HEK293 (cell line): ENCODE measurements at regions of chr6 and their contacts with region 1.

Region 1: GRCh38 chr6:53437557-53438202 is 88.9 kb upstream of the ELOVL5 start:
- H3K4me3 ChIP-seq: no peak overlapping the region
- H3K27ac ChIP-seq: no peak overlapping the region
- H3K4me1 ChIP-seq: no peaks in the 10 kb centered on the region
- CTCF ChIP-seq: peak; percentile 18; the same call in 1 of the 2 replicates

Region 2: GRCh38 chr6:53294095-53294494 is 143.6 kb before region 1 on chr6:
- CTCF ChIA-PET with region 1: interaction called, 10 read pairs
- POLR2A ChIA-PET with region 1: no interaction called
- H3K4me3 ChIP-seq: no peak overlapping the region
- H3K27ac ChIP-seq: no peak overlapping the region
- H3K4me1 ChIP-seq: no peaks in the 10 kb centered on the region; the same call in 1 of the 2 replicates
- CTCF ChIP-seq: peak; percentile 30; the same call in 1 of the 2 replicates

Region 3: DNA sequence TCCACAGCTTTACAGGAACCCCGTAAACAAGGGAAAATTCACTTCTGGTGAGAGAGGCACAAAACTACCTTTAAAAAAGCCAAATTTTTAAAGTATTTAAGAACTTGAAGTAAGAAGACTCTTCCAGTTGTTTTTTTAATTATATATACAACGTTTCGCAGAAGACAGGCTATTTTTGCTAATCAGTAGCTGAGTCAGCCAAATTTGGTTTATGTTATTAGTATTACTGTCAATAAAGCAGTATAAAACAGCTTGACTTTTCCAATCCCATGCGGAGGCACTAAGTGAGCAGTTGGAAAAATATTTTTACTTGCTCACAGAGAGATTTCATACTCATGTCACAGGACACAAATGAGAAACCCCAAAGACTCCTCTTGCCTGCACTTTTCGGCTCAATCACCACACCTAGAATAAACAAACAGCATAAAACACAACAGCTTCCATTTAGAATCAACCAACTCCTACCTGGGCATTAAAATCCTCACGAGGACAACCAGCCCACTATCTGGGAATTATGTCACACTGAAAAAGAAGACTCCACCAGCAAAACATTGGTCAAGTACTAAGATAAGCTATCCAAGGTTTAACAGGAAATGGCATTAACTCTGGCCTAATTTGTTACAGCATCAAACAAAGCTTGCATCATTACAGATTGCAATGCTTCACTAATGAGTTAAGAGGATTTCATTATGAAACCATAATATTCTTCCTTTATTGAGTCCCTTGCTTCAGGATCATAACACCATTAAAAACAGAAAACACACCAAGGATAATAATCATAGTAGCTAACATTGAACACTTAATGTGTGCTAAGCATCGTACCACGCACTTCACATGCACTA is 115.3 kb before region 1 on chr6:
- CTCF ChIA-PET with region 1: no interaction called
- POLR2A ChIA-PET with region 1: no interaction called
- H3K4me3 ChIP-seq: no peak overlapping the region
- H3K27ac ChIP-seq: no peak overlapping the region
- H3K4me1 ChIP-seq: peaks cover 33% of the 10 kb centered on the region
- CTCF ChIP-seq: no peak

Region 4: DNA sequence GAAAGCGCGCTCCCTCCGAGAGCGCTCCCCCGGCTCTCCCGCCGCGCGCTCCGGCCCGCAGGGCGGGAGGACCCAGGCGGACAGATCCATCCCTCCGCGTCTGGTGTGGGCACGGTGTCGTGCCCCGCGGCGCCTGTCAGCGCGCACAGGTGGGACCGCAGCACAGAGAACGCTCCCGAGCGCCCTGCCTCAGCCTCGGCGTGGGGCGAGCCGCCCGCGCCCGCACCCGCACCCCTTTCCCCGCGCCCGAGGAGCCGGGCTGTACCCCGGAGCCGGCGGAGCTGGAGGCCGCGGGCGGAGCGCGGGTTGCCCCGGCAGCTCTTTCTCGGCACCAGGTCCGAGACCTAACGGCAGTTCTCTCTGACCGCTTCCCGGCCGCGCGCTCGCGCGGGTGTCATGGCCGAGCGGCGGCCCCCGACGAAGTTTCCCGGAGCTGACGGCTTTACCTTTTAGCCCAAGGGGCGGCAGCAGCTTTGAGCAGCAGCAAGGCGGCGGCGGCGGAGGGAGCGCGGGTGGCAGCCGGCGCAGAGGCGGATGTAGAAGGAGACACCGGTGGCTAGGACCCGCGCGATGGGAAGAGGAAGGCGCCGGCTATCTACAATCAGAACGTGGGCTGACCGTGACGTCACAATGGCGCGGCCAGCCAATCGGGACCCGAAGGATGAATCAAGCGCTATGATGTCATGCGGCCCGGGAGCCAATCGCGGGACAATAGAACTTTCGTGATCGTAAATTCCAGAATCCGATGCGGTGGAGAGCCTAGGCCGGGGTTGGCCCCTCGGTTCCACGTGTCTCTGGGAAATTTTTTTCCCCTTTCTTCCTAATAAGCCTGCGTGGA is 89.1 kb before region 1 on chr6 and contains the start of gene ELOVL5:
- CTCF ChIA-PET with region 1: interaction called, 11 read pairs
- POLR2A ChIA-PET with region 1: no interaction called
- H3K4me3 ChIP-seq: peak within 1 kb of the TSS; percentile 90
- H3K27ac ChIP-seq: peak within 1 kb of the TSS; percentile 86
- H3K4me1 ChIP-seq: peaks cover 6% of the 10 kb centered on the region
- CTCF ChIP-seq: peak; percentile 22; the same call in 1 of the 2 replicates

Region 5: GRCh38 chr6:53447869-53448268 is 10.2 kb after region 1 on chr6:
- CTCF ChIA-PET with region 1: interaction called, 10 read pairs
- POLR2A ChIA-PET with region 1: no interaction called
- H3K4me3 ChIP-seq: no peak overlapping the region
- H3K27ac ChIP-seq: no peak overlapping the region
- H3K4me1 ChIP-seq: no peaks in the 10 kb centered on the region
- CTCF ChIP-seq: no peak

Region 6: GRCh38 chr6:53458105-53458866 is 20.6 kb after region 1 on chr6:
- CTCF ChIA-PET with region 1: no interaction called
- POLR2A ChIA-PET with region 1: no interaction called
- H3K4me3 ChIP-seq: no peak overlapping the region
- H3K27ac ChIP-seq: no peak overlapping the region
- H3K4me1 ChIP-seq: no peaks in the 10 kb centered on the region
- CTCF ChIP-seq: no peak

Region 7: GRCh38 chr6:53484476-53485280 is 47.0 kb after region 1 on chr6:
- CTCF ChIA-PET with region 1: interaction called, 21 read pairs
- POLR2A ChIA-PET with region 1: no interaction called
- H3K4me3 ChIP-seq: no peak overlapping the region
- H3K27ac ChIP-seq: no peak overlapping the region
- H3K4me1 ChIP-seq: peaks cover 6% of the 10 kb centered on the region; the same call in 1 of the 2 replicates
- CTCF ChIP-seq: peak; percentile 70; the same call in 1 of the 2 replicates